ENCODE measurements at regions of chr1 and their contacts with region 1.

Region 1: GRCh38 chr1:199675937-199676336 is 351.6 kb upstream of the NR5A2 start:
- DNase-seq: no peak
- ATAC-seq: no peak
- H3K4me3 Mint-ChIP-seq: no peak overlapping the region
- H3K27ac Mint-ChIP-seq: no peak overlapping the region
- H3K4me1 Mint-ChIP-seq: no peaks in the 10 kb centered on the region
- H3K27me3 Mint-ChIP-seq: peaks cover 13% of the 10 kb centered on the region
- CTCF ChIP-seq: no peak

Region 2: DNA sequence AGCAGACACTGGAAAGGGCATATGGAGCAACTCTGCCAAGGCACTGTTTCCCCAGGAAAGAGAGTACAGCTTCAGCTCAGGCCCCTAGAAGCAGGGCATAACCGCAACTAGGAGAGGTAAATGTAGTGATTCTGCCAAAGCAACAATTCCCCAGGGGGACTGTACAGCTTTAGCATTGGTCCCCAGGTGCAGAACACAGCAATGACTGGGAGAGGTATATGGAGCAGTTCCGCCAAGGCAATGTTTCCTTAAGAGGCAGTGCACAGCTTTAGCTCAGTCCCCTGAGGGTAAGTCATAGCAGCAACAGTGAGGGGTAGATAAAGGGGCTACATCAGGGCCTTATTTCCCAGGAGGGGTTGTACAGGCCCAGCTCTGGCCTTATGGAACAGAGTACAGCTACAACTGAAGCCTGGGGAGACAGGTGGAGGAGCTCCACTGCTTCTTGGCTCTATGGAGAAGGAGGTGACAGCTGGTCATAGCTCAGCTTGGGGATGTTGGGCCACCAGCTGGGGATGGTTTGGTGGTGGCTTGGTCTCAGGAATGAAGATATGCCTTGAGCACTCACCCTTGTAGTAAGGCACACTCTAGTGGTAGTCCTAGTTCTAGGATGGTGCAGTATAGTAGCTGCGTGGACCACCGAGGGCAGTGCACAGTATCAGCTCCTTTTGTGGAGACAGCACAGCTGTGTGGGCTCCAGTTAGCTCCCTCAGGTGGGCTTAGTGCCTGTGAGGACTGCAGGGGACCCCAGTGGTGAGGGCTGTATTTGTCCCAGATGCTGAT is 454.4 kb before region 1 on chr1:
- CTCF ChIA-PET with region 1: no interaction called
- POLR2A ChIA-PET with region 1: interaction called, 10 read pairs
- intact Hi-C with region 1: no loop called
- DNase-seq: no peak
- ATAC-seq: peak; percentile 45
- H3K4me3 Mint-ChIP-seq: no peak overlapping the region
- H3K27ac Mint-ChIP-seq: no peak overlapping the region
- H3K4me1 Mint-ChIP-seq: peaks cover 14% of the 10 kb centered on the region
- H3K27me3 Mint-ChIP-seq: no peaks in the 10 kb centered on the region
- CTCF ChIP-seq: no peak

Region 3: GRCh38 chr1:199377211-199377610 is 298.7 kb before region 1 on chr1:
- CTCF ChIA-PET with region 1: no interaction called
- POLR2A ChIA-PET with region 1: no interaction called
- intact Hi-C with region 1: no loop called
- DNase-seq: no peak
- ATAC-seq: no peak
- H3K4me3 Mint-ChIP-seq: no peak overlapping the region
- H3K27ac Mint-ChIP-seq: no peak overlapping the region
- H3K4me1 Mint-ChIP-seq: peaks cover 3% of the 10 kb centered on the region
- H3K27me3 Mint-ChIP-seq: no peaks in the 10 kb centered on the region
- CTCF ChIP-seq: no peak

Region 4: GRCh38 chr1:199700551-199700950 is 24.6 kb after region 1 on chr1:
- CTCF ChIA-PET with region 1: no interaction called
- POLR2A ChIA-PET with region 1: no interaction called
- intact Hi-C with region 1: no loop called
- DNase-seq: no peak
- ATAC-seq: no peak
- H3K4me3 Mint-ChIP-seq: no peak overlapping the region
- H3K27ac Mint-ChIP-seq: no peak overlapping the region
- H3K4me1 Mint-ChIP-seq: no peaks in the 10 kb centered on the region
- H3K27me3 Mint-ChIP-seq: peaks cover 4% of the 10 kb centered on the region
- CTCF ChIP-seq: no peak

Measured in activated B cell treated with CpG ODN at 0.5 μM for 24 hours (primary cell).